PC-3 (cell line): ENCODE measurements at regions of chr10 and their contacts with region 1.

Region 1: DNA sequence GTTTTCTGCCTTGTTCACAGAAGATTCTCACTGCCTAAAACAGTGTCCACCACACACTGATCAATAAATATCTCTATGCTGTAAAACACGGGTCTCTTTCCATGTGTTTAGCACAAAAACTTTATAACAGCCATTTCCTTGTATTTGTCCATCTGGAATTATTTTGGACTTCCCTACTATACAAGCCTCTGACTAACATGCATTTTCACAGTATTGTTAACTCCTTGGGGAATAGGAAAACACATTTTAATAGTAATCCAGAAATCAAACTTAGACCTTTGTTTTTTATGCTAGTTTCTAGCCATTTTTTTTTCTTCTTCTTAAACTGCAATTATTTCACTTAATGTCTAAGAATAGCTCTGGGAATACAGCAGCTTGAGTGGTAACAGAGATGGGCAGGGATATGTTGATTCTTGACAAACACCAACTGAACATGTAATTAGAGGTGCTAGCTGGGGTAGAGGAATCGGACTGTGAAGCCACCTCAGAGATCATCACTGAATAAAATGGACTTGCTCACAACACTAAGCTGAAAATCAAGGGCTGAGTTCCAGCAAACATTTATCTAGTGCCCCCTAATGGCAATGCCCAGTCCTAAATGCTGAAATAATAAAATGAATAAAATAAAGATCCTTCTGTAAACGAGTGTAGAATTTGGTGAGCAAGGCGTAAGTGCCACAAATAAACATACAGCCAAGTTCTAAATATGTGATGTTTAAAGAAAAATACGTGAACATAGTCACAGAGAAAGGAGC is 593.1 kb downstream of the SORCS1 start:
- DNase-seq: peak; percentile 68
- ATAC-seq: peak; percentile 25; the same call in 1 of the 2 replicates
- H3K4me3 ChIP-seq: no peak overlapping the region
- H3K27ac ChIP-seq: peak overlapping the region; percentile 96
- H3K4me1 ChIP-seq: peaks cover 58% of the 10 kb centered on the region
- H3K27me3 ChIP-seq: no peaks in the 10 kb centered on the region
- CTCF ChIP-seq: peak; percentile 69

Region 2: DNA sequence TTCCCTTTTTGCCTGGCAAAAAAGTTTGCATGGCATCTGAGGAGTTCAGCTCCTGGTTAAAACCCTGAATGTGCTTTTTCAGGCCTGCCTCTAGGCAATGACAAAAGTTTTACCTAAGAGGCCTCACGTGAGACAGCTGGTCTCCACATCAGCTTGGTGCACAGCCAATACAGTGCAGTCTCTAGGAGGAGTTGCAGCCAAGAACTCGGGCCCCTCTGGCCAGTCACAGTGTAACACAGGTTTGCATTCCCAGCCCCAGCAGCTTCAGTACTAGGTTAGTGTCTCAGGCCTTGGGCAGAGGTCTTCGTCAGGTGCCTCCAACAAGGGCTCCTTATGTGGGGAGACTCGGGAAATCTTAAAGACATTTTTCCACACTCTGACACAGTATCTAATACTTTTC is 178.6 kb before region 1 on chr10:
- CTCF ChIA-PET with region 1: no interaction called
- POLR2A ChIA-PET with region 1: interaction called, 20 read pairs
- intact Hi-C with region 1: no loop called
- DNase-seq: no peak
- ATAC-seq: no peak
- H3K4me3 ChIP-seq: no peak overlapping the region
- H3K27ac ChIP-seq: no peak overlapping the region
- H3K4me1 ChIP-seq: peaks cover 17% of the 10 kb centered on the region
- H3K27me3 ChIP-seq: no peaks in the 10 kb centered on the region
- CTCF ChIP-seq: no peak

Region 3: GRCh38 chr10:106648534-106649481 is 77.4 kb after region 1 on chr10:
- CTCF ChIA-PET with region 1: no interaction called
- POLR2A ChIA-PET with region 1: no interaction called
- intact Hi-C with region 1: no loop called
- DNase-seq: no peak
- ATAC-seq: no peak
- H3K4me3 ChIP-seq: no peak overlapping the region
- H3K27ac ChIP-seq: no peak overlapping the region
- H3K4me1 ChIP-seq: peaks cover 18% of the 10 kb centered on the region; the same call in 1 of the 2 replicates
- H3K27me3 ChIP-seq: no peaks in the 10 kb centered on the region
- CTCF ChIP-seq: no peak

Region 4: DNA sequence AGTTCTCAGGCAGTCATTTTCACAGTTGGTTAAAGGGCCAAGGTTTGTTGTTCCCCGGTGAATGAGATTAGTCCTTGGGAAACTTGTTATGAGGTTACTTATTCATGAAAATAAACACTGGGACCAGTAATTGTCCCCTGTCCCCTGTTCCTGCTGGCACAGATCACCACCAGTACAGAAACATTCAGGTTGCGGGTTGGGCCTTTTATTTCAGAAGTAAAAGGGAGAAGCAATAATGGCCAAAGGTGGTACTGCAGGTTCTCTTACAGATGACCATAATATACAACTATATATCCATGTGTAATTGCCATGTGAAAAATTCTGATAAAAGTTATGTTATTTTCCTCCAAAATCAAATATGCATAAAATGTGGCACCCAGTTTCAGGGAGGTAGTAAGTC is 151.2 kb after region 1 on chr10:
- CTCF ChIA-PET with region 1: no interaction called
- POLR2A ChIA-PET with region 1: no interaction called
- intact Hi-C with region 1: no loop called
- DNase-seq: peak; percentile 10
- ATAC-seq: no peak
- H3K4me3 ChIP-seq: no peak overlapping the region
- H3K27ac ChIP-seq: no peak overlapping the region
- H3K4me1 ChIP-seq: no peaks in the 10 kb centered on the region
- H3K27me3 ChIP-seq: peaks cover 27% of the 10 kb centered on the region
- CTCF ChIP-seq: peak; percentile 36; the same call in 1 of the 2 replicates

Region 5: DNA sequence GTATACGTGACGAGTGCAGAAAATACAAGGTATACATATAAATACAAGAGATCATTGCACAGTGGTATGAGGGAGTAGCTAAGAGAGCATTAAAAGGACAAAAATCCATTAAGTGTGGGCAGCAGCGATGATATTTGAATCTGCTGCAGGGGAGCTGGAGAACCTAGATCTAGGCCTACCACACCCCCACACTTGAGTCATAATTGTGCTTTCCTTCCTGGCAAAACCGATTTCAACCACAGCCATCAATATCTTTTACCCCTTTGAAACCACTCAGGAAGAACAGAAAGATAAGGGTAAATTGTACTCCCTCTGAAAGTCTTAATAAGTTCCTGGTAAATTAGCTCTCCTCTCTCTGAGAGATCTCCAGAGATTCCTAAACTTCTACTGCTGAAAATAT is 248.1 kb after region 1 on chr10:
- CTCF ChIA-PET with region 1: no interaction called
- POLR2A ChIA-PET with region 1: no interaction called
- intact Hi-C with region 1: no loop called
- DNase-seq: no peak
- ATAC-seq: no peak
- H3K4me3 ChIP-seq: no peak overlapping the region
- H3K27ac ChIP-seq: no peak overlapping the region
- H3K4me1 ChIP-seq: no peaks in the 10 kb centered on the region
- H3K27me3 ChIP-seq: peaks cover 72% of the 10 kb centered on the region
- CTCF ChIP-seq: no peak